CD4-positive, alpha-beta memory T cell (primary cell): ENCODE measurements at regions of chr7 and their contacts with region 1.

Region 1: DNA sequence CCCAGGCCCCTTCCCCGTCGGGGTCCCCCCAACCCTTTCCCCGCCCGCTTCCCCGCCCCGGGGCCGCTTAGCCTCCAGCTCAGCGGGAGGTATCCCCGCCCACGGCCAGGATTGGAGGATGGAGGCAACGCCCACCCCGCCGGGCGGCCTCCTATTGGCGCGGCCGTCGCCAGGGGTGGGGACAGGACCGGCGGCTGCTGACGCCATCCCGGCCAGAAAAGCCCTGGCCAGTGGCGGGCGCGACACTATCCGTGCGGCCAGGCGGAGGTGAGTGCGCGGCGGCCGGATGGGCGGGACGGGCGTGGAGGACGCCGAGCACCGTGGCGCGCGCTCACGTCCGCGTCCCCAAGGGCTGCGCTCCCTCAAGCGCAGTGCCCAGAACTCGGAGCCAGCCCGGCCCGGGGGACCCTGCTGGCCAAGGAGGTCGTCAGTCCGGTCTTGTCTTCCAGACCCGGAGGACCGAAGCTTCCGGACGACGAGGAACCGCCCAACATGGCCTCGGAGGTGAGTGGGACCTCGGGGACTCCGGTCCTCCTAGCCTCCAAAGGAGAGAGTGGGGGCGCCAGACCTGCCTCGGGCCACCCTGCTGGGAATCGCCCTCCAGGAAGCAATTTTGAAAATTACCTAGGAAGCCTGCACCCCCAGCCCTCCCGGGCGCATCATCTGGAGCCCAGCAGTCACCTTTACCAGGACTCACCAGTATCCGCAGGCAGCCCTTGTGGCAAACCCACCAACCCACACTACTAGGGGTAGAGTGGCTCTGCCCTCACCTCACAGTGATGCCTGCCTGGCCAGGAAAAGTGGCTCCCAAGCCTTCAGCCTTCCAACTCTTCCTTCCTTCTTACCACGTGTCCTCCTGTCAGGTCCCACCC is at the start of gene ASL:
- DNase-seq: peak; percentile 80 to 83 (median 80)
- H3K4me3 ChIP-seq: peak within 1 kb of the TSS; percentile 63 to 76
- H3K4me3 Mint-ChIP-seq: peak within 1 kb of the TSS; percentile 83 to 93 (median 87)
- H3K27ac ChIP-seq: peak within 1 kb of the TSS; percentile 69
- H3K27ac Mint-ChIP-seq: peak within 1 kb of the TSS; percentile 59 to 90 (median 86)
- H3K4me1 ChIP-seq: peaks cover 12% of the 10 kb centered on the region
- H3K4me1 Mint-ChIP-seq: peaks cover 9 to 17% (median 14%) of the 10 kb centered on the region in 4 donors
- H3K27me3 ChIP-seq: no peaks in the 10 kb centered on the region
- H3K27me3 Mint-ChIP-seq: no peaks in the 10 kb centered on the region
- total RNA-seq, gene ASL: 11.8 to 13.7 TPM

Region 2: GRCh38 chr7:65731562-65732035 is 344.2 kb before region 1 on chr7:
- CTCF ChIA-PET with region 1: no interaction called
- POLR2A ChIA-PET with region 1: no interaction called
- intact Hi-C with region 1: no loop called
- DNase-seq: no peak
- H3K4me3 ChIP-seq: no peak overlapping the region
- H3K4me3 Mint-ChIP-seq: peak overlapping the region in 4 of 8 donors; percentile 6 to 80 (median 44)
- H3K27ac ChIP-seq: no peak overlapping the region
- H3K27ac Mint-ChIP-seq: no peak overlapping the region
- H3K4me1 ChIP-seq: no peaks in the 10 kb centered on the region
- H3K4me1 Mint-ChIP-seq: peaks cover 2 to 5% (median 3%) of the 10 kb centered on the region in 4 donors
- H3K27me3 ChIP-seq: no peaks in the 10 kb centered on the region
- H3K27me3 Mint-ChIP-seq: no peaks in the 10 kb centered on the region

Region 3: GRCh38 chr7:65750511-65751344 is 325.1 kb before region 1 on chr7:
- CTCF ChIA-PET with region 1: no interaction called
- POLR2A ChIA-PET with region 1: no interaction called
- intact Hi-C with region 1: loop called (anchors 10 kb)
- DNase-seq: peak; percentile 83 to 86 (median 85)
- H3K4me3 ChIP-seq: peak overlapping the region; percentile 91 to 99
- H3K4me3 Mint-ChIP-seq: peak overlapping the region; percentile 93 to 98 (median 96)
- H3K27ac ChIP-seq: peak overlapping the region; percentile 60
- H3K27ac Mint-ChIP-seq: peak overlapping the region; percentile 87 to 97 (median 94)
- H3K4me1 ChIP-seq: peaks cover 24% of the 10 kb centered on the region
- H3K4me1 Mint-ChIP-seq: peaks cover 7 to 45% (median 27%) of the 10 kb centered on the region in 4 donors
- H3K27me3 ChIP-seq: no peaks in the 10 kb centered on the region
- H3K27me3 Mint-ChIP-seq: no peaks in the 10 kb centered on the region

Region 4: DNA sequence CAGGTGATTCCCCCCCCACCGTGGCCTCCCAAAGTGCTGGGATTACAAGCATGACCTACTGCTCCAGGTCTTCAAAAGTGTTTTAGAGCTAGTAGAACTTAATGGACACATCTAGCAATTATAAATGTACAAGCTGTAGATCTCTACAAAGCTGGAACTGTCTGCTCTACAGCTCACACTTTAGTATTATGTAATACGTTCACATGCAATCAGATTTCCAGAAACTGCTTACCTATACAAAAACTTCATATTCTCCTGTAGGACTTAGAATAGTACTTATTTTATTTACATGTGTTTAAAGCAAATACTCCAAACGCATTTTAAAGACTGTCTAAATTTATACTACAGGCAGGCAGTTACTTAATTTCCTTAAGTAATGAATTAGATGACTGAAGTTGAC is 39.4 kb before region 1 on chr7:
- CTCF ChIA-PET with region 1: no interaction called
- POLR2A ChIA-PET with region 1: no interaction called
- intact Hi-C with region 1: no loop called
- DNase-seq: no peak
- H3K4me3 ChIP-seq: no peak overlapping the region
- H3K4me3 Mint-ChIP-seq: no peak overlapping the region
- H3K27ac ChIP-seq: no peak overlapping the region
- H3K27ac Mint-ChIP-seq: no peak overlapping the region
- H3K4me1 ChIP-seq: no peaks in the 10 kb centered on the region
- H3K4me1 Mint-ChIP-seq: no peaks in the 10 kb centered on the region
- H3K27me3 ChIP-seq: no peaks in the 10 kb centered on the region
- H3K27me3 Mint-ChIP-seq: peaks cover under 1 to 5% of the 10 kb centered on the region in 2 donors

Region 5: DNA sequence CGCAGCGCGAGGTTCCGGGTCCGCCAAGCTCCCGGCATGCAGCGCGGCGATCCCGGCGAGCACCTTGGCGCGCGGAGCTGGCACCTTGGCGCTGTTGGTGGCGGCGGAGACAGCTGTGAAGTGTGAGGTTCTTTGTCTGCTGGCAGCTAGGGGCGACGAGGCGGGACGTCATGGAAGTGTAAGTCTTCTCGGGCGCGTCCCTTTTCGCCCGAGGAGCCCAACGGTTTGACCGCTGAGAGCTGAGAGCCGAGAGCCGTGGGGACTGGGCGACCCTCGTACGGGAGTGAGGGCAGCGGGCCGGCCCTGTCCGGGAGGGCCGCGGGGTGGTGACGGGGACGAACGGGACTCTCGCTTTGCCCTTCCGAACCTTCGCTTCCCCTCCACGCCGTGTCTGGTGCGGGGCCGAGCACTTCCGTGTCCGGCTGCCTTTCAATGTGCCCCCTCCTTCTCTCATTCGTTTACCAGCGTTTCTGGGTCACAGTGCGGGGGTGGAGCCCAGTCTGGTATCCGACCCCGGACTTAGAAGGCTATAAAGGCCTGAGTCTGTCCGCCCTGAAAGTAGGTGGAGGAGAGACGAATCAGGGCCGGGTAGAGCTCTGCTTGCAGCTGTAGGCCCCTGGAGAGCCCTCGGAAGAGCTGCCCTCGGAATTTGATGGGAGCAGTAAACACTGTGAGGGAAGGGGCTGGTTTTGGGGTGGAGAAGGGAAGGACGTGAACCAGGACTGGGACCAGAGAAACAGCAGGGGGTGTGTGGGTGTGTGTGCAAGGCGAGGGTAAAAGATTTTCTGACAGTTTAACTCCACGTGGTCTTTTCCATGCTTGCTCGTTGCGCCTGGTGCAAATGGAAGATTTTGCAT is 39.2 kb after region 1 on chr7 and contains the start of gene CRCP:
- CTCF ChIA-PET with region 1: interaction called, 4 read pairs
- POLR2A ChIA-PET with region 1: interaction called, 5 read pairs
- intact Hi-C with region 1: loop called (anchors 1 kb)
- DNase-seq: peak; percentile 83 to 89 (median 84)
- H3K4me3 ChIP-seq: peak within 1 kb of the TSS; percentile 78 to 87
- H3K4me3 Mint-ChIP-seq: peak within 1 kb of the TSS; percentile 88 to 98 (median 96)
- H3K27ac ChIP-seq: peak within 1 kb of the TSS; percentile 82
- H3K27ac Mint-ChIP-seq: peak within 1 kb of the TSS; percentile 88 to 98 (median 95)
- H3K4me1 ChIP-seq: peaks cover 47% of the 10 kb centered on the region
- H3K4me1 Mint-ChIP-seq: peaks cover 31 to 54% (median 41%) of the 10 kb centered on the region in 4 donors
- H3K27me3 ChIP-seq: no peaks in the 10 kb centered on the region
- H3K27me3 Mint-ChIP-seq: no peaks in the 10 kb centered on the region
- total RNA-seq, gene CRCP: 32.8 to 36.8 TPM